ENCODE measurements at regions of chr1 and their contacts with region 1.

Region 1: DNA sequence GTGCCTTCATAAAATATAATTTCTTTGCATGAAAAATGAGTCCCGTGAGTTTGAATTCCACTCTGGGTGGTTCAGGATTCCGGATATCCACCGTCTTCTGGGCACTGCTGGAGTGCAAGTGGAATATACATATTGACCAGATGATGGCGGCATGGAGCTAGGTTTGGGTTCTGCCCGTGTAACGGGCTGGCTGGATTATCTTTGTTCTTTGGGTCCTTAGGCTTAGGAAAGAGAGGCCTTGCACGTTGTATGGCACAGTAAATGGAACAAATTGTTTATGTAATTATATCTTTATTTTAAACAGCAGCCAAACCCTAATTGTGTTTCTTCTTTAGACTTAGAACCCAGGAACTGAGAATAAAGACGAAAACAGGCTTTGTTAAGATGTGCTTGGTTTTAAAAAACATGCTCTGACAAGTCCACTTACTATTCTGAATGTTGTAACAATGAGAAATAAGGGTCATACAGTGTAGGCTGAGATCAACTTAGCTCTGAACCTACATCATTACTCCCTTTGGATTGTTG is 13.5 kb upstream of the ACBD6 start:
- DNase-seq: peak; percentile 50
- ATAC-seq: peak; percentile 98
- H3K4me3 ChIP-seq: no peak overlapping the region
- H3K27ac ChIP-seq: 0 out of 2 replicates have a peak overlapping the region, but pooled peaks have one; percentile 5
- H3K4me1 ChIP-seq: peaks cover 5% of the 10 kb centered on the region; the same call in 1 of the 2 replicates
- H3K27me3 ChIP-seq: no peaks in the 10 kb centered on the region
- CTCF ChIP-seq: peak; percentile 90

Region 2: GRCh38 chr1:180548686-180549317 is 32.9 kb after region 1 on chr1:
- CTCF ChIA-PET with region 1: interaction called, 10 read pairs
- POLR2A ChIA-PET with region 1: no interaction called
- in situ Hi-C with region 1: no loop called
- intact Hi-C with region 1: no loop called
- DNase-seq: no peak
- ATAC-seq: no peak
- H3K4me3 ChIP-seq: no peak overlapping the region
- H3K27ac ChIP-seq: no peak overlapping the region
- H3K4me1 ChIP-seq: no peaks in the 10 kb centered on the region
- H3K27me3 ChIP-seq: no peaks in the 10 kb centered on the region
- CTCF ChIP-seq: no peak

Region 3: DNA sequence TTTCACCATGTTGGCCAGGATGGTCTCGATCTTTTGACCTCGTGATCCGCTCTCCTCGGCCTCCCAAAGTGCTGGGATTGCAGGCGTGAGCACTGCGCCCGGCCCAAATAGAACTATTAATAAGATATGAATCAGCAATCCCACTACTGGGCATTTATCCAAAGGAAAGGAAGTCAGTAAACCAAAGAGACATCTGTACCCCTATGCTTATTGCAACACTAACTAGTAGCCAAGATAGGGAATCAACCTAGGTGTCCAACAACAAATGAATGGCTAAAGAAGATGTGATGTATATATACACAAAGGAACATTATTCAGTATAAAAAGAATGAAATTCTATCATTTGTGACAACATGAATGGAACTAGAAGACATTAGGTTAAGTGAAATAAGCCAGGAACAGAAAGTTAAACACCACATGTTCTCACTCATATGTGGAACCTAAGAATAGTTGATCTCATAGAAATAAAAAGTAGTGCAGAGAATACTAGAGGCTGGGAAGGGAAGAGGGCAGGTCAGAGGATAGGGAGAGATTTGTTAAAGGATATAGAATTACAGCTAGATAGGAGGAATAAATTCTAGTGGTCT is 164.7 kb after region 1 on chr1:
- CTCF ChIA-PET with region 1: interaction called, 10 read pairs
- POLR2A ChIA-PET with region 1: no interaction called
- in situ Hi-C with region 1: no loop called
- intact Hi-C with region 1: no loop called
- DNase-seq: no peak
- ATAC-seq: 0 out of 2 replicates have a peak, but pooled peaks have one; percentile 17
- H3K4me3 ChIP-seq: no peak overlapping the region
- H3K27ac ChIP-seq: no peak overlapping the region
- H3K4me1 ChIP-seq: no peaks in the 10 kb centered on the region
- H3K27me3 ChIP-seq: no peaks in the 10 kb centered on the region
- CTCF ChIP-seq: no peak

Region 4: GRCh38 chr1:180863158-180863775 is 347.3 kb after region 1 on chr1:
- CTCF ChIA-PET with region 1: interaction called, 5 read pairs
- POLR2A ChIA-PET with region 1: no interaction called
- in situ Hi-C with region 1: no loop called
- intact Hi-C with region 1: loop called (anchors 5 kb)
- DNase-seq: peak; percentile 47
- ATAC-seq: no peak
- H3K4me3 ChIP-seq: no peak overlapping the region
- H3K27ac ChIP-seq: no peak overlapping the region
- H3K4me1 ChIP-seq: no peaks in the 10 kb centered on the region
- H3K27me3 ChIP-seq: no peaks in the 10 kb centered on the region
- CTCF ChIP-seq: peak; percentile 68; the same call in 1 of the 2 replicates

Region 5: DNA sequence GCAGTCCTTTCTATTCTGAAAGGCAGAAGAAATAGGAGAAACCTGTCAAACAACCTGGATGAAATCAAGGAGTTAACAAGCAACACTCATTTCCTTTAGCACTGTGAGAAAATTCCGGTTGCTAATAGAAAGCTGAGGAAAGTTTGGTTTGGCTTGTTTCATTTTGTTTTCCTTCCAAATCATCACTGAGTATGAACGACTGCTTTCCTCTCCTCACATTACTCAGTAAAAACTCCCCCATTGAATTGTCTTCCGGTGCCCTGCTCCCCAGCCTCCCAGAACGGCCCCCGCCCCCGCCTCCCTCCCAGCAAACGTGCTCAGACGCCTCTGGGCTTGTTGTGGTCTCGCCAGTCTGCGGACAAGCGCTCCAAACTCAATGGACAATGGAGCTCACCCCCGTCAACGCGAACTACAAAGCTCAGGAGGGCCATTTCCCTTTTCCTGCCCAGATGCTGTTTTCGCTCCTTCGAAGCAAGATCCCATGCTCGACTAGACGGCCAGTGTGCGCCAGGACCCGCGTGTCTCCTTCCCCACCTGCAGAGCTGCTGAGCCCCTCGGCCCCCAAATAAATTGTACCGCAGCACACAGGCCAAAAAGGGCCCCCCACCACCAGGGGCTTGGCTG is 506.0 kb after region 1 on chr1:
- CTCF ChIA-PET with region 1: no interaction called
- POLR2A ChIA-PET with region 1: interaction called, 10 read pairs
- in situ Hi-C with region 1: no loop called
- intact Hi-C with region 1: no loop called
- DNase-seq: no peak
- ATAC-seq: peak; percentile 42
- H3K4me3 ChIP-seq: peak overlapping the region; percentile 79 to 94
- H3K27ac ChIP-seq: peak overlapping the region; percentile 83
- H3K4me1 ChIP-seq: peaks cover 18% of the 10 kb centered on the region
- H3K27me3 ChIP-seq: no peaks in the 10 kb centered on the region
- CTCF ChIP-seq: no peak

Region 6: GRCh38 chr1:181166377-181167196 is 650.7 kb after region 1 on chr1:
- CTCF ChIA-PET with region 1: interaction called, 3 read pairs
- POLR2A ChIA-PET with region 1: interaction called, 5 read pairs
- in situ Hi-C with region 1: no loop called
- intact Hi-C with region 1: loop called (anchors 5 kb)
- DNase-seq: peak; percentile 67
- ATAC-seq: peak; percentile 100
- H3K4me3 ChIP-seq: peak overlapping the region in 1 of 2 experiments; percentile 32; a peak in 2 of 4 replicates
- H3K27ac ChIP-seq: no peak overlapping the region
- H3K4me1 ChIP-seq: no peaks in the 10 kb centered on the region
- H3K27me3 ChIP-seq: no peaks in the 10 kb centered on the region
- CTCF ChIP-seq: peak; percentile 90

Region 7: GRCh38 chr1:181181766-181182165 is 665.8 kb after region 1 on chr1:
- CTCF ChIA-PET with region 1: interaction called, 10 read pairs
- POLR2A ChIA-PET with region 1: no interaction called
- in situ Hi-C with region 1: no loop called
- intact Hi-C with region 1: no loop called
- DNase-seq: no peak
- ATAC-seq: no peak
- H3K4me3 ChIP-seq: no peak overlapping the region
- H3K27ac ChIP-seq: no peak overlapping the region
- H3K4me1 ChIP-seq: no peaks in the 10 kb centered on the region
- H3K27me3 ChIP-seq: peaks cover 9% of the 10 kb centered on the region
- CTCF ChIP-seq: no peak